ENCODE measurements at regions of chr12 and their contacts with region 1.

Region 1: GRCh38 chr12:55738123-55739024 is 4.5 kb upstream of the GDF11 start:
- DNase-seq: peak; percentile 79 to 87 (median 83)
- H3K4me3 ChIP-seq: peak overlapping the region; percentile 39 to 75
- H3K4me3 Mint-ChIP-seq: peak overlapping the region; percentile 87 to 95 (median 90)
- H3K27ac ChIP-seq: peak overlapping the region; percentile 76
- H3K27ac Mint-ChIP-seq: peak overlapping the region; percentile 82 to 97 (median 96)
- H3K4me1 ChIP-seq: peaks cover 19% of the 10 kb centered on the region
- H3K4me1 Mint-ChIP-seq: peaks cover 21 to 38% (median 26%) of the 10 kb centered on the region in 4 donors
- H3K27me3 ChIP-seq: no peaks in the 10 kb centered on the region
- H3K27me3 Mint-ChIP-seq: no peaks in the 10 kb centered on the region

Region 2: DNA sequence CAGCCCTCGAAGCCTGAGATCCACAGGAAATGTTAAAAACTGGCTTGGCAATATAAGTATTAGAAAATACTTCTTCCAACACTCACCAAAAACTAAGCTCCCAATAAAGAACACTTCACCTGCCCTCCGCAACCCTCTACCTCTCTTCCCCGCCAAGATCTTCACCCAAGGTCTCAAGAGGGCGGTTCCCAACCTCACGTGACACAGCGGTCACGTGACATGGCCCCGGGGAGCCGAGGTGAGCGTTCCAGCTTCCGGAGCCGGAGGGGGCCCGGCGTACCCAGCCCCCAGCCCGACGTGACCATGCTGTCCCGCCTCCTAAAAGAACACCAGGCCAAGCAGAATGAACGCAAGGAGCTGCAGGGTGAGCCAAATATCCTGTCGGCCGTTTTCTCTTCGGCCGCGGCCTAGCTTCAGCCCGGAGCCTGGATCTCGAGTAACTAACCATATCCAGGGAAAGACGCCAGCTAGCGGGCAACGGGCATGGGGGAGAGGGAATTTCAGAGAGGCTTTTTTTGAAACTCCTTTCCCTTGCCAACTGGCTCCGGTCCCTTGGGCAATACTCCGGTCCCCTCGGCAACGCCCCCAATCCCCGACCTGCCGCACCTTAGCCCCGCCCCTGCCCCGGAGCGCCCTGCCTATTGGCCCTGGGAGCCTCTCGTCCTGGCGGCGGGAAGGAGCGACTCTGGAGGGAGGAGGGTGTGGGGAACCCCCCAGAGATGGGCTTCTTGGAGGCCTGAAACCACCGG is 22.4 kb before region 1 on chr12 and contains the start of gene BLOC1S1:
- CTCF ChIA-PET with region 1: interaction called, 44 read pairs
- POLR2A ChIA-PET with region 1: interaction called, 29 read pairs
- intact Hi-C with region 1: loop called (anchors 1 kb)
- DNase-seq: peak; percentile 88 to 94 (median 90)
- H3K4me3 ChIP-seq: peak within 1 kb of the TSS; percentile 84 to 99
- H3K4me3 Mint-ChIP-seq: peak within 1 kb of the TSS; percentile 90 to 99 (median 94)
- H3K27ac ChIP-seq: peak within 1 kb of the TSS; percentile 91
- H3K27ac Mint-ChIP-seq: peak within 1 kb of the TSS; percentile 94 to 99 (median 98)
- H3K4me1 ChIP-seq: peaks cover 39% of the 10 kb centered on the region
- H3K4me1 Mint-ChIP-seq: peaks cover 18 to 50% (median 36%) of the 10 kb centered on the region in 4 donors
- H3K27me3 ChIP-seq: no peaks in the 10 kb centered on the region
- H3K27me3 Mint-ChIP-seq: peaks cover 0 to 1% of the 10 kb centered on the region in 2 donors
- total RNA-seq, gene BLOC1S1: 80.3 to 87.0 TPM

Region 3: DNA sequence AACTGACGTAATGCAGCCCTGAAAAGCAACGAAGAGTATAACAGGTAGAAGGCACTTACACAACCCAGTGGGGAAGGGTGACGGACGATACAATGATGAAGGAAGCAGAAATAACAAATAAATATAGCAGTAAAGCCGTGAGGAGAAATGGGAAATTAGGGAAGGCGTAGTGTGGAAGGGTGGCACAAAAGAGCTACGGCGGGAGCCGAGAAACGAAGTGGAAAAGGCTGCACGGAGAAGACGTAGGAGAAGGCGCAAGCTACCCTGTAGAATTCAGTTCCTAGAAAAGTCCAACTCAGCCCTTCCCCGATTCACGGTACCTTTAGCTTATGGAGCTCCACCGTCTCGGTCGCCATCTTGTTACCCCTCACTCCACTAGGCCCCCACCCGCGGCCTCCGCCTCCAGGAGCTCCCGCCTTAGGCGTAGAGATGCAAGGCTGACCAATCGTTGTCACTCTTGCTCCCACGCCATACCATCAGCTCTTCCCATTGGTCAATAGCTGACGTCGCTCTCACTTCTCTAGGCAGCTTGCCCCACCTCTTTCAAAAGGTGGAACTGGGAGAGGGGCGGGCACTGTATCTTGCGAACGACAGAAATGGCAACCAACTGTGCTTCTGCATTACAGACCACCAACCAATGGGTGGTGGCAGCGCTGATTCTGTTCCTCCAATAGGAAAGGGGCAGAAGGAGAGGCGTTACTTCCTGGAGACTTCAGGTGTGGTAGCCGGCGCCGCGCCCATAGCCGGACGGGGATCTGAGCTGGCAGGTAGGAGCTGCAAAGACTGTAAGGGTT is 79.2 kb after region 1 on chr12 and contains the starts of genes ORMDL2 and SARNP:
- CTCF ChIA-PET with region 1: interaction called, 28 read pairs
- POLR2A ChIA-PET with region 1: interaction called, 27 read pairs
- intact Hi-C with region 1: loop called (anchors 2 kb)
- DNase-seq: peak; percentile 95 to 100 (median 99)
- H3K4me3 ChIP-seq: peak within 1 kb of the TSS; percentile 76 to 96
- H3K4me3 Mint-ChIP-seq: no peak within 1 kb of the TSS
- H3K27ac ChIP-seq: peak within 1 kb of the TSS; percentile 88
- H3K27ac Mint-ChIP-seq: no peak within 1 kb of the TSS
- H3K4me1 ChIP-seq: peaks cover 51% of the 10 kb centered on the region
- H3K4me1 Mint-ChIP-seq: peaks cover 23 to 36% (median 25%) of the 10 kb centered on the region in 4 donors
- H3K27me3 ChIP-seq: no peaks in the 10 kb centered on the region
- H3K27me3 Mint-ChIP-seq: no peaks in the 10 kb centered on the region
- total RNA-seq, gene ORMDL2: 42.6 to 44.4 TPM
- total RNA-seq, gene SARNP: 47.7 to 49.4 TPM

Region 4: DNA sequence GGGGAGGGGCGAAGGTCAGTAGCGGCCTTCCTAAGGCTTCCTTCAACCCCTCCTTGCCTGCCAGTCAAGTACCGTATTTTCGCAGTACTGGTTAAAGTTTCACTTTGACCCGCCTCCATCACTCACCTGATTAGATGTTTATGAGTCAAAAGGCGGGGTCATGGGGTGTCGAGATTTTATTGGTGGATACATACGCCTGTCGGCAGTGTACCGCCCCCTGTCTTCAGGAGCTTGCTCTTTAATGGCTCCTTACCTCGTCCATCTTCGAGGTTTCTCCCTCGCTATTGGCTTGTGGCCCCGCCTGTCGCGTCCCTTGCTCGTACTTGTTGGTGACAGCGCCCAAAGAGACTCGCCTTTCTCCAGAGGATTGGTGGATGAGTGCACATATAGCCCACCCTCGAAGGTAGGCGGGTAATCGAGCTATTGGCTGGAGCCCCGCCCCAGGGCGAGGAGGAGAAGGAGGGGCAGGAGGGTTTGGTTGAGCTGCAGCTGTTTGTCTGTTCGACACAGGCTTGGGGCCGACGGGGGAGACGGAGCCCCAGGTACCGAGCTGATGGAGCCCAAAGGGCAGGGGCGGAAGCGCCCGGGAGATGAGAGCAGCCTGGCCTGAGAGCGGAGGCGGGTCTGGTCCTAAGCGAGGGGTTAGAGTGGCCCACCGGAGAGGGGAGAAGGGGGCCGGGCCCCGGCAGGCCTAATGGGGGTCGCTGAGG is 235.4 kb after region 1 on chr12 and contains the start of gene RAB5B:
- CTCF ChIA-PET with region 1: interaction called, 5 read pairs
- POLR2A ChIA-PET with region 1: interaction called, 19 read pairs
- intact Hi-C with region 1: no loop called
- DNase-seq: peak; percentile 95 to 100 (median 99)
- H3K4me3 ChIP-seq: peak within 1 kb of the TSS; percentile 60 to 73
- H3K4me3 Mint-ChIP-seq: no peak within 1 kb of the TSS
- H3K27ac ChIP-seq: peak within 1 kb of the TSS; percentile 87
- H3K27ac Mint-ChIP-seq: no peak within 1 kb of the TSS
- H3K4me1 ChIP-seq: peaks cover 37% of the 10 kb centered on the region
- H3K4me1 Mint-ChIP-seq: peaks cover 14 to 30% (median 23%) of the 10 kb centered on the region in 4 donors
- H3K27me3 ChIP-seq: no peaks in the 10 kb centered on the region
- H3K27me3 Mint-ChIP-seq: no peaks in the 10 kb centered on the region
- total RNA-seq, gene RAB5B: 106 to 112 TPM

Region 5: DNA sequence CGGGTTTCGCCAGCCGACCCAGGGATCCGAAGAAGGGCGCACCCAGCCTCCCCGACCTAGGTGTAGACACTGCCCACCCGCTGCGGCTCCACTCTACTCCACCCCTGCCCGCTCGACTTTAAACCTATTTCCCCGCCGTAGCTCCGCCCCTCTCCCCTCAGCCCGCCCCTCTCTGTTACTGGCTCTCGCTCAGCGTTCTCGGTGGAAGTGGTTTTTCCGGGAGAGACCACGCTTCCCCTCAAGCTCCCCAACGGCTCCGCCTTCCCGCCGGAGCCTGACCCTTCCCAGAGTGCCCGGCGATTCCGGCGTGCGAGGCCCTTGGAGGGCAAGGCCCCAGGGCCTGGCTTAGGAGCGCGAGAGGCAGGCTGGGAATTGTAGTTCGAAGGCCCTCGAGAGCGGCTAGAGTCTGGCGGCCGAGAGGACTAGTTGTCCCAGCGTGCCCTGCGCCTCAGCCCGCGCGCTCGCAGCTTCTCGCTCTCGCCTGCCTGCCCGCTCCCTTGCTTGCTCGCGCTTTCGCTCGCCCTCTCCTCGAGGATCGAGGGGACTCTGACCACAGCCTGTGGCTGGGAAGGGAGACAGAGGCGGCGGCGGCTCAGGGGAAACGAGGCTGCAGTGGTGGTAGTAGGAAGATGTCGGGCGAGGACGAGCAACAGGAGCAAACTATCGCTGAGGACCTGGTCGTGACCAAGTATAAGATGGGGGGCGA is 365.9 kb after region 1 on chr12 and contains the start of gene PA2G4:
- CTCF ChIA-PET with region 1: interaction called, 3 read pairs
- POLR2A ChIA-PET with region 1: interaction called, 8 read pairs
- intact Hi-C with region 1: loop called (anchors 5 kb)
- DNase-seq: peak; percentile 95 to 97 (median 96)
- H3K4me3 ChIP-seq: peak within 1 kb of the TSS; percentile 62 to 90
- H3K4me3 Mint-ChIP-seq: peak within 1 kb of the TSS; percentile 89 to 99 (median 96)
- H3K27ac ChIP-seq: peak within 1 kb of the TSS; percentile 82
- H3K27ac Mint-ChIP-seq: peak within 1 kb of the TSS; percentile 97 to 100 (median 98)
- H3K4me1 ChIP-seq: peaks cover 49% of the 10 kb centered on the region
- H3K4me1 Mint-ChIP-seq: peaks cover 34 to 62% (median 47%) of the 10 kb centered on the region in 4 donors
- H3K27me3 ChIP-seq: no peaks in the 10 kb centered on the region
- H3K27me3 Mint-ChIP-seq: no peaks in the 10 kb centered on the region
- total RNA-seq, gene PA2G4: 106 to 108 TPM

Region 6: GRCh38 chr12:56230432-56231183 is 492.2 kb after region 1 on chr12:
- CTCF ChIA-PET with region 1: no interaction called
- POLR2A ChIA-PET with region 1: no interaction called
- intact Hi-C with region 1: no loop called
- DNase-seq: no peak
- H3K4me3 ChIP-seq: no peak overlapping the region
- H3K4me3 Mint-ChIP-seq: no peak overlapping the region
- H3K27ac ChIP-seq: no peak overlapping the region
- H3K27ac Mint-ChIP-seq: peak overlapping the region in 2 of 7 donors; percentile 17 to 32
- H3K4me1 ChIP-seq: peaks cover 3% of the 10 kb centered on the region
- H3K4me1 Mint-ChIP-seq: peaks cover 0 to 4% (median under 1%) of the 10 kb centered on the region in 4 donors
- H3K27me3 ChIP-seq: no peaks in the 10 kb centered on the region
- H3K27me3 Mint-ChIP-seq: no peaks in the 10 kb centered on the region

Region 7: GRCh38 chr12:56468216-56469006 is 730.0 kb after region 1 on chr12 and contains the start of gene SPRYD4:
- CTCF ChIA-PET with region 1: interaction called, 3 read pairs
- POLR2A ChIA-PET with region 1: no interaction called
- intact Hi-C with region 1: loop called (anchors 10 kb)
- DNase-seq: peak; percentile 94 to 96 (median 95)
- H3K4me3 ChIP-seq: peak within 1 kb of the TSS; percentile 90 to 98
- H3K4me3 Mint-ChIP-seq: peak within 1 kb of the TSS; percentile 93 to 98 (median 96)
- H3K27ac ChIP-seq: peak within 1 kb of the TSS; percentile 73
- H3K27ac Mint-ChIP-seq: peak within 1 kb of the TSS; percentile 94 to 99 (median 98)
- H3K4me1 ChIP-seq: peaks cover 26% of the 10 kb centered on the region
- H3K4me1 Mint-ChIP-seq: peaks cover 14 to 44% (median 26%) of the 10 kb centered on the region in 4 donors
- H3K27me3 ChIP-seq: no peaks in the 10 kb centered on the region
- H3K27me3 Mint-ChIP-seq: no peaks in the 10 kb centered on the region
- total RNA-seq, gene SPRYD4: 6.5 to 6.9 TPM